Activated CD4-positive, alpha-beta T cell treated with anti-CD3 and anti-CD28 coated beads, Interleukin-2, amount 10 ng/mL, durations not matched to agents 24 days and 14 days (primary cell): ENCODE measurements at regions of chr13 and their contacts with region 1.

Region 1: GRCh38 chr13:27270594-27271520 is at the start of gene RASL11A:
- DNase-seq: peak; percentile 93
- H3K4me3 Mint-ChIP-seq: peak within 1 kb of the TSS; percentile 90
- H3K27ac Mint-ChIP-seq: no peak within 1 kb of the TSS
- H3K4me1 Mint-ChIP-seq: peaks cover 11% of the 10 kb centered on the region
- H3K27me3 Mint-ChIP-seq: peaks cover 35% of the 10 kb centered on the region
- total RNA-seq, gene RASL11A: 1.8 and 2.8 TPM in 2 replicates

Region 2: DNA sequence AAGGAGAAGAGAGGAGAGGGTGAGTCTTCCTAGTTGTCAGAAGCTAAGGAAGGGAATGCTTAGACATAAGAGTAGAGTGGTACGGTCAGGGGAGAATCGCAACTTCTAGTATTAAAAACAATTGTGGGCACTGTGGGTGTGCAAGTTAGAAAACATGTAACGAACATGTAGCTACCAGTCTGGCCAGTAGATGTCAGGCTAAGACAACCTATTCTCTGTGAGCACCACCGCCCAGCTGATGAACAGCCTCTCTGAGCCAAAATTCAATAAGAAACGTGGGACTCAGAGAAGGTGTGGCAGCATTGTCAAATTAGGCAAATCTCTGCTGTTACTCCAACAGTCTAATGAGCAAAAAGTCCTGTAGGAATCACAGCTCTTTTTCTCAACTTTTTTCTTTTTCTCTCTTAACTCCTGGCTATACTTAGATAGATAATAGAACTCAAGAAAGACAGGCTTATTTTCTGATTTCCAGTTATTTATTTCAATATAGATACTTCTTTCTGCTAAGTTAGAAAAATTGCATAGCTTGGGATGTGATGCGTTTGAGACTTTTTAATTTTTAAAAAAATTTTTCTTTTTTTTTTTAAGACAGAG is 285.5 kb before region 1 on chr13:
- intact Hi-C with region 1: loop called (anchors 1 kb)
- DNase-seq: peak; percentile 92
- H3K4me3 Mint-ChIP-seq: no peak overlapping the region
- H3K27ac Mint-ChIP-seq: no peak overlapping the region
- H3K4me1 Mint-ChIP-seq: peaks cover 9% of the 10 kb centered on the region
- H3K27me3 Mint-ChIP-seq: peaks cover 4% of the 10 kb centered on the region